Dorsolateral prefrontal cortex (tissue), 120 donors: ENCODE measurements at regions of chr17 and their contacts with region 1.

Region 1: DNA sequence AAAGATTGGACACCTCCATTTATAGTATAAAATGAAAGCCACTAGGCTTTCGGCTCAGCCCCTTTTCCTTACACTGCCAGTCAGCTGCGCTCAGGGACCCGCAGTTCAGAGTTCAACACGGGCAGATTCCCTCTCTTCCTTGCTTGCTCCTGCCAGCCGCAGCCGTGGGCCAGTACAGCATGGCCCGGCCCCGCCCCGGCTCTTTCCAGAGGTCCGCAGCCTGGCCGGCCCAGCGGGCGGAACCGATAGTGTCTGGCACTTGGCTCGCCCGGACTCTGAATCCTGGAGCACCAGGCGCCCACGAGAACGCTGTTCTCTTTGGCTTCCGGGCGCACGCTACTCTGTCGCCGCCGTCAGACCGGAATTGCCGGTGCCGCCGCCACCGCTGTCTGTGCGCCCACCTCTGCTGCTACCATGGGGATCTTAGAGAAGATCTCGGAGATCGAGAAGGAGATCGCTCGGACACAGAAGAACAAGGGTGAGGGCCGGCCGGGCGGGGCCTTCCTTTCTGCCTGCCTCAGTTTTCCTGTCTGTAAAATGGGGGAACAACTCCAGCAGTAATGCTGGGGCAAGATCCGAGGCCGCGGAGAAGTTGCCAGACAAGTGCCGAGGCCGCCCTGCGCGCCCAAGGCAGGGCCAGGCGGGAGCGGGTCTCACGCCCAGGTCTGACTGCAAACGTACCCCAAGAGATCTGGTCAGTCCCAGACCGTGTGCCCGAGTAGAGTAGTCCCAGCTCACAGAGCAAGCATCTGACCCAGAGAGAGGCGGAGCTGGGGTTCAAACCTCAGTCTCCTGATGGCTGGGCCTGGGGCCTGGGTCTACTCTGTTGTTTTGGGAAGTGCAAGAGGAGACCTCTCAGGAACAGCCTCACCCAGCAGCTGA is at the start of gene DRG2:
- DNase-seq: peak; percentile 84 to 94 (median 89)
- H3K4me3 ChIP-seq: peak within 1 kb of the TSS; percentile 62 to 98 (median 86)
- H3K27ac ChIP-seq: peak within 1 kb of the TSS; percentile 18 to 96 (median 85)
- H3K27me3 ChIP-seq: peaks cover 0 to 3% (median 0%) of the 10 kb centered on the region in 45 donors
- CTCF ChIP-seq: peak in 55 of 56 donors; percentile 16 to 70 (median 51)
- total RNA-seq, gene DRG2: 27.0 to 50.8 (median 38.5) TPM

Region 2: GRCh38 chr17:17970699-17971430 is 117.0 kb before region 1 on chr17:
- intact Hi-C with region 1: no loop called
- DNase-seq: no peak
- H3K4me3 ChIP-seq: peak overlapping the region; percentile 70 to 99 (median 95)
- H3K27ac ChIP-seq: peak overlapping the region in 12 of 59 donors; percentile 81 to 90 (median 87)
- H3K27me3 ChIP-seq: no peaks in the 10 kb centered on the region
- CTCF ChIP-seq: no peak

Region 3: GRCh38 chr17:18038861-18039534 is 48.9 kb before region 1 on chr17 and contains the starts of genes ATPAF2 and GID4:
- intact Hi-C with region 1: loop called in 1 of 2 experiments (anchors 5 kb)
- DNase-seq: peak; percentile 99 to 100 (median 100)
- H3K4me3 ChIP-seq: peak within 1 kb of the TSS; percentile 67 to 100 (median 94)
- H3K27ac ChIP-seq: peak within 1 kb of the TSS in 57 of 59 donors; percentile 49 to 93 (median 84)
- H3K27me3 ChIP-seq: no peaks in the 10 kb centered on the region
- CTCF ChIP-seq: peak in 33 of 56 donors; percentile 13 to 56 (median 28)
- total RNA-seq, gene ATPAF2: 23.1 to 61.4 (median 36.3) TPM
- total RNA-seq, gene GID4: 10.2 to 20.5 (median 15.2) TPM